Posterior cingulate gyrus (tissue), 11 donors: ENCODE measurements at regions of chr13 and their contacts with region 1.

Region 1: GRCh38 chr13:67238277-67238859 is 8.2 kb upstream of the PCDH9 start:
- DNase-seq: no peak

Region 2: DNA sequence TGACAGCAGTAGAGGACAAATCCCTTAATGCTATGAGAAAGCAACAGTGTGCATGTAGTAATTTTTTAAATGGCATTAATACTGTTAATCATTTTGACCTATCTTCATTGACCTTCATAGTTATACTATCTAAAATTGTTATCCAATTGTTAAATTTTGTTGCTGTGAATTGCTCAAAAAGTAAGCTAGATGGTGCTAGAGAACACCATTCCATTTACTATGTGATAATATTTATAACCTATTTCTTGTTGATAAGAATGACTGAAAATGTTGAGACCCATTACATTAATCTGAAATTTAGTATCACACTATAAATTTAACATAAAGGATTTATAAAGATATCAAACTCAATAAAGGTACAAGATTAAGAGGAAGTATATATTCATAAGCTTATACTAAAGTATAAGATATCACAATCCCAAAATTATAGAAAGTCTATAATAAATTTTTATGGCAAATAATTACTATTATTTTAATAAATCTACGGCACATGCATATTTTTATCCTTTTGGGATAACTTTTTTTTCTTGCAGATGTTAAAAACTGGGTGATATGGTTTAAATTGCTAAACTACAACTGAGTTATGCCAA is 1581.5 kb before region 1 on chr13:
- intact Hi-C with region 1: loop called (anchors 5 kb)
- DNase-seq: no peak